Ascending aorta (tissue), 2 donors: ENCODE measurements at regions of chr10 and their contacts with region 1.

Region 1: GRCh38 chr10:117496616-117497028 is 45.9 kb upstream of the EMX2 start:
- DNase-seq: peak; percentile 10 to 88
- H3K4me3 ChIP-seq: no peak overlapping the region
- H3K27ac ChIP-seq: no peak overlapping the region
- H3K4me1 ChIP-seq: no peaks in the 10 kb centered on the region
- H3K27me3 ChIP-seq: no peaks in the 10 kb centered on the region
- CTCF ChIP-seq: peak; percentile 86 to 97 (median 95)

Region 2: GRCh38 chr10:117541909-117542705 is 45.5 kb after region 1 on chr10:
- intact Hi-C with region 1: no loop called
- DNase-seq: no peak
- H3K4me3 ChIP-seq: peak overlapping the region; percentile 5 to 46
- H3K27ac ChIP-seq: no peak overlapping the region
- H3K4me1 ChIP-seq: peaks cover 6 to 22% of the 10 kb centered on the region in 2 donors
- H3K27me3 ChIP-seq: peaks cover 47% of the 10 kb centered on the region
- CTCF ChIP-seq: no peak

Region 3: DNA sequence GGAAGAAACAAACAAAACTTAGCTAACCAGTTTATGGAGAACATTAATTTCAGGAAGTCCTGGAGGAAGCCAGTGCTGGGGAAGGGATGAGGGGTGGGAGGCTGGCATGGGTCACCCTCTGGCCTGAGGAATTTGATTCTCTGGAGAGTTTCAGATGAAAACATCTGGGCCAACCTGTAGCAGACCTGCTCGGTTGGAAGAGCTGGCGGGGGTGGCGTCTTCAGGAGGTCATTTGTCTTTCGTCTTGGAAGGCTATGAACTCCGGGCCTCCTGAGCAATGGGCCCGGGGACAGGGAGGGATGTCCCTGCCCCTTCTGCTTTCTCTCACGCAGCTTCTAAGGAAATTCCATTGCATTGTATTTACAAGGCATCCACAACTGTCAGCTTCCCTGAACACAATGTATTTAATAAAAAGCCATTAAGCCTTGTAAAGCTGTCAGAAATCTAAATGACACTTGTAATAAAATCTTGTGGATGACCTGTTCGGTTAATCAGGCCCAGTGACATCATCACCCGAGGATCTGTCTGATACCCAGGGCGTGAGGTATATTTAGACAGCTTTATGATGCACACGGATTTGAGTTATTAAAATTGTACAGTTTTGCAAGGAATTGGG is 299.6 kb after region 1 on chr10:
- intact Hi-C with region 1: no loop called
- DNase-seq: no peak
- H3K4me3 ChIP-seq: no peak overlapping the region
- H3K27ac ChIP-seq: no peak overlapping the region
- H3K4me1 ChIP-seq: no peaks in the 10 kb centered on the region
- H3K27me3 ChIP-seq: no peaks in the 10 kb centered on the region
- CTCF ChIP-seq: no peak

Region 4: DNA sequence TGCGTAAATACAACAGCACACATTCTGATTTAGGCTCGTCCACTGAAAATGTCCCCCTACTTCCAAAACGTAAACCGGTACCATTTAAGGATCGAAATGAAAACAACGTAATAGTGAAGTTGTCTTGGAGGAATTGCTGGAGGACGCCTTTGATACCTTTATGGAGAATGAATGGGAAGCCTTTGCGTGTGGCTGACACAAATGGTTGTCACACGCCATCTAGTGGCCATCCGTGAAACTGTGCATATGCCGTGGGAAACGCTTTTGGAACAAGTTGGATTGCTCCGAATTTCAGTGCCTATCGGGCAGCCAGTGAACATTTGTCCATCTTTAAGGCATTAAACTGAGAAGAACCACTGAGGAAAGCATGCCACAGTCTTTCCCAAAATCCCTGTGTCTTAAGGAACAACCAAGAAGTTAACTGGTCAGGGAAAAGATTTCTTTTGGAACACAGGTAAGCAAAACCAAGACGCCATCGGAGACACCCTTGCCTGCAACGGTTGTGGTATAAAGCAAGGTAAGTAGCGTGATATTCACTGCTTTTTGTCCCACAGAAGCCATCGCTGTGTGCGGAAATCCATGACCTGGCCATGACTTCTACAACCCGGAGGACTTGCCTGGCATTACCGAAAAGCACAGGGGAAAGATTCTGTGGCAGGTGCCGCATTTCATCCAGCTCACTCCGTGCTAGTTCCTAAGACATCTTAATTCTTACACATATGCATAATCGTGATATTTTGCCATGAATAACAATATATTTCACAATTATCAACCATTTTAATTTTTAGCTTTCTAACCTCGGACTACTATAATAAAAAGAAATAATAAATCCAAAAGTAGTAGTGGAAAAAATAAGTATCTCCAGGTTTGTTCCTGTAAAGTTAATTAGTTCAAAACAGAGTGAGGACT is 744.9 kb after region 1 on chr10:
- intact Hi-C with region 1: loop called (anchors 1 kb)
- DNase-seq: peak in 1 of 2 donors; percentile 89
- H3K4me3 ChIP-seq: no peak overlapping the region
- H3K27ac ChIP-seq: no peak overlapping the region
- H3K4me1 ChIP-seq: peaks cover 0 to 3% of the 10 kb centered on the region in 2 donors
- H3K27me3 ChIP-seq: peaks cover under 1% of the 10 kb centered on the region
- CTCF ChIP-seq: peak; percentile 76 to 94 (median 90)

Region 5: GRCh38 chr10:118423800-118424479 is 927.3 kb after region 1 on chr10:
- intact Hi-C with region 1: loop called (anchors 2 kb)
- DNase-seq: peak in 1 of 2 donors; percentile 75
- H3K4me3 ChIP-seq: no peak overlapping the region
- H3K27ac ChIP-seq: no peak overlapping the region
- H3K4me1 ChIP-seq: no peaks in the 10 kb centered on the region
- H3K27me3 ChIP-seq: no peaks in the 10 kb centered on the region
- CTCF ChIP-seq: peak; percentile 13 to 56 (median 48)

Region 6: DNA sequence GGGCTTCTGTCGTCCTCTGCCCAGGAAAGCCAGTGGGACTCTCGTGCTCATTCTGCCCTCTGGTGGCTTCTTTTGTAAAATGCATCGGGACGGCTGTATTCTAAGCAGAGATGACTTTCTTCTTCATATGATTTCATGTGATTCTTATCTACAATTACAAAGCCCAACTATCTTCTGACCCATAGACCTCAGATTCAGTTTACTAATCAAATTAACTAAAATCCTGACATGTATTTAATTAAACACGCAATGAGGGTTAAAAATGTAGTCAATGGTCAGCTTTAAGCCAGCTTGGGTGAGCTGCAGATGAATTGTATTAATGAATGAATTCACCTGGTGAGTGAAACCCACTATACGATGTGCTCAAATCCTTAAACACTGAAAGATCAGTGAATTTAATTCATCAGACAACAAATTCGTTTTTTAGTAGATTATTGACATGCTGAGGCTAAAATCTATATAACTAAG is 963.1 kb after region 1 on chr10:
- intact Hi-C with region 1: loop called (anchors 10 kb)
- DNase-seq: peak in 1 of 2 donors; percentile 70
- H3K4me3 ChIP-seq: no peak overlapping the region
- H3K27ac ChIP-seq: no peak overlapping the region
- H3K4me1 ChIP-seq: no peaks in the 10 kb centered on the region
- H3K27me3 ChIP-seq: peaks cover 4% of the 10 kb centered on the region
- CTCF ChIP-seq: peak in 2 of 3 experiments; percentile 49 to 68